ENCODE measurements at regions of chr9 and their contacts with region 1.

Region 1: GRCh38 chr9:113376634-113377567 is at the start of gene HDHD3:
- DNase-seq: peak; percentile 82 to 87
- H3K4me3 ChIP-seq: peak within 1 kb of the TSS; percentile 96
- H3K4me3 Mint-ChIP-seq: peak within 1 kb of the TSS; percentile 77
- H3K27ac Mint-ChIP-seq: peak within 1 kb of the TSS; percentile 86
- H3K4me1 ChIP-seq: peaks cover 51% of the 10 kb centered on the region
- H3K4me1 Mint-ChIP-seq: peaks cover 26% of the 10 kb centered on the region
- H3K27me3 ChIP-seq: no peaks in the 10 kb centered on the region
- H3K27me3 Mint-ChIP-seq: no peaks in the 10 kb centered on the region
- CTCF ChIP-seq: no peak
- total RNA-seq, gene HDHD3: 60.9 and 64.9 TPM in 2 replicates

Region 2: DNA sequence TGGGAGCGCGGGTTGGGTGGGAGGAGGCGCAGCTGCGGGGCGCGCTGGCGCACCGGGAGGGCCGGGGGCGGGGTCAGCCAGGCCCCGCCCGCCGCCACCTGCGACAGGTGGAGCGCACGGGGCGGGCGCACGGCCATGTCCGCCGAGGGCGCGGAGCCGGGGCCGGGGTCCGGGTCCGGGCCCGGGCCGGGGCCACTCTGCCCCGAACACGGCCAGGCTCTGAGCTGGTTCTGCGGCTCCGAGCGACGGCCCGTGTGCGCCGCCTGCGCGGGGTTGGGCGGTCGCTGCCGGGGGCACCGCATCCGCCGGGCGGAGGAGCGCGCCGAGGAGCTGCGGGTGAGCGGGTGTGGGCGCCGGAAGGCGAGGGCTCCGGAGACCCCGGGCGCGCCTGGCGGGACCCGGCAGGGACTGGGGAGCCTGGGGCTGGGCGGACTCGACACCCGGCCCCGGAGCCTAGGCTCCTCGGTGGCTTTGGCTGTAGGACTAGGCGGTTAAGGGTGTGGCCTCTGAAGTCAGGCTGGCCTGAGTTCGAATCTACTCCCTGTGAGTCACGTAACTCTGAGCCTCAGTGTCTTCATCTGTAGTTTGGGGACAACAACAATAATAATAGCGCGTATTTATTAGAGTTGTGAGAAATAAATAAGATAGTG is 27.3 kb before region 1 on chr9 and contains the start of gene BSPRY:
- CTCF ChIA-PET with region 1: interaction called, 5 read pairs
- POLR2A ChIA-PET with region 1: interaction called, 8 read pairs
- intact Hi-C with region 1: loop called (anchors 2 kb)
- DNase-seq: peak in 1 of 2 experiments; percentile 69
- H3K4me3 ChIP-seq: peak within 1 kb of the TSS; percentile 85
- H3K4me3 Mint-ChIP-seq: peak within 1 kb of the TSS; percentile 72
- H3K27ac Mint-ChIP-seq: no peak within 1 kb of the TSS
- H3K4me1 ChIP-seq: no peaks in the 10 kb centered on the region
- H3K4me1 Mint-ChIP-seq: peaks cover 12% of the 10 kb centered on the region
- H3K27me3 ChIP-seq: no peaks in the 10 kb centered on the region
- H3K27me3 Mint-ChIP-seq: no peaks in the 10 kb centered on the region
- CTCF ChIP-seq: no peak
- total RNA-seq, gene BSPRY: 14.5 and 14.7 TPM in 2 replicates

Region 3: GRCh38 chr9:113454914-113455761 is 78.2 kb after region 1 on chr9:
- CTCF ChIA-PET with region 1: no interaction called
- POLR2A ChIA-PET with region 1: interaction called, 16 read pairs
- intact Hi-C with region 1: no loop called
- DNase-seq: peak; percentile 82 to 93
- H3K4me3 ChIP-seq: no peak overlapping the region
- H3K4me3 Mint-ChIP-seq: peak overlapping the region; percentile 42
- H3K27ac Mint-ChIP-seq: peak overlapping the region; percentile 66
- H3K4me1 ChIP-seq: peaks cover 44% of the 10 kb centered on the region
- H3K4me1 Mint-ChIP-seq: peaks cover 24% of the 10 kb centered on the region
- H3K27me3 ChIP-seq: no peaks in the 10 kb centered on the region
- H3K27me3 Mint-ChIP-seq: no peaks in the 10 kb centered on the region
- CTCF ChIP-seq: no peak

Measured in Caco-2 (cell line).